Activated naive CD4-positive, alpha-beta T cell treated with anti-CD3 and anti-CD28 coated beads for 36 hours (primary cell): ENCODE measurements at regions of chr1 and their contacts with region 1.

Region 1: DNA sequence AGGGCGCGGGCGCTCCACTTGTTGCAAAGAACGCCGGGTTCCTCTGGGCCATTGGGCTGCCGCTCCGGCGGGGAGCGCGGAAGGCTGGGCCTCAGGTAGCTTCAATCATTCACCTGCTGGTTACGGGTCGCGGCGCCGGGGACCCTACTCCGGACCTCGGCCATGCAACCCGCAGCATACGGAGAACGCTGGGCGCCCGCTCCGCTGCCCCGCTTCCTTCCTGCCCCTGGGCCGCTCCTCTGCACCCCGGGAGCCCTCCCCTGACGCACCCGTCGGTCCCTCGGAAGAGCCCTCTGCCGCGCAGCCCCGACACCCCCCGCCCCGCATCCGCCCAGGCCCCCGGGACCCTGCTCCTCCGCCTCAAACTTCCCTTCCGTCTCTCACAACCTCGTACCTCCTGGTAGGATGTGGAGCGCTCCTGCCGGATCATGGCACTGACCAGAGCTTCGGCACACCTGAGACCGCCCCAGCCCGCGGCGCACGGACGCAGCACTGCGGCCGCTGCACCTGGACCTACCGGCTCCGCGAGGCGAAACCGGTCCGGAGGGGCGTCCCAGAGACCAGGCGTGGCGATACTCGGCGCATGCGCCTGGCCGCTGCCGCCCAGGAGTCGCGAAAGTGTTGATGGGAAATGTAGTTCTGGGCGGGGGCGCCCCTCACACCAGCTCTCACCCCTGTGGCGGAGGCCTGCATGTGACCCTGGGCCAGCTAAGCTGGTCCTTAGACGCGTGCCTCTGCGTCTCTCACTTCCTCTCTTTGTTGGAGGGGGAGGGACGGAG is at the start of gene PACC1:
- DNase-seq: peak; percentile 88
- H3K4me3 Mint-ChIP-seq: peak within 1 kb of the TSS; percentile 95
- H3K27ac Mint-ChIP-seq: peak within 1 kb of the TSS; percentile 72
- H3K4me1 Mint-ChIP-seq: peaks cover 23% of the 10 kb centered on the region
- H3K27me3 Mint-ChIP-seq: no peaks in the 10 kb centered on the region
- total RNA-seq, gene PACC1: 9.5 to 10.2 TPM

Region 2: DNA sequence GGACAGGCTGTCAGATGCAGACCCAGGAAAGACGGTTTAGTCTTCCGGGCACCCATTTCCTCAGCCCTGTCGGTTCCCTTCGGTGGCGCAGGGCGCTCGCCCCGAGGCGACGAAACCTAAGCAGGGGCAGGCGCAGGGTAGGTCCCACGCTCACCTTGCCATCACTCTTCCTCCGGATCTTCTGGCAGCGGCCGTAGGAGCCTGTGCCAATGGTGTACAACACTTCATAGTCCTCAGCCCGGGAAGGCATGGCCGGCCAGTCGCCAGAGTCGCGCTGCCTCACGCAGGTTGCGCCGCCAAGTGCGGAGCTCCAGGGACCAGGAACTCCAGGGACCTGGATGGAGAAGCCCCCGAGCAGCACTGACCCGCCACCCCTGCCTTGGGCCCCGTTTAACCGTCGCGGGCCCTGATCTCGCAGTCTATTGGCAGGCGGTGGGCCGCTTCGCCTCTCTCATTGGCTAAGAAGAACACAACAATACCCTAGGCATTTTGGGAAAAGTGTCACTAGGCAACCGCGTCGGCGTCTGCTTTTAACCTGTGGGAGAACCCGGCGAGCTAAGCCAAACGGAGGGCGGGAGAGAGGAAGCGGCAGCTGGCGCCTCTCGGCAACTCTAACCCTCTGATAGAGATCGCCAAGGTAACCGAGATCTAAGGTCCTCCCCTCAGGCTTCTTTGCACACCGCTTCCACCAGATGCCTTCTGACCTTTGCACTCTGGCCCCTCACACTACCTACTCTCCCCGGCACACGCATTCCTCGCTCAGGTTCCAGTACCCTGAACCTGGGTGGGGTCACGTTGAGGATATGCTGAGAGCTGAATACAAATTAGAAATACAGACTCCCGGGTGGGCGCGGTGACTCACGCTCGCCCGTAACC is 739.0 kb before region 1 on chr1 and contains the start of gene NEK2:
- CTCF ChIA-PET with region 1: no interaction called
- intact Hi-C with region 1: loop called (anchors 1 kb)
- DNase-seq: peak; percentile 97
- H3K4me3 Mint-ChIP-seq: peak within 1 kb of the TSS; percentile 86
- H3K27ac Mint-ChIP-seq: peak within 1 kb of the TSS; percentile 76
- H3K4me1 Mint-ChIP-seq: peaks cover 7% of the 10 kb centered on the region
- H3K27me3 Mint-ChIP-seq: no peaks in the 10 kb centered on the region
- total RNA-seq, gene NEK2: 60.8 to 62.3 TPM